CD4-positive, alpha-beta T cell (primary cell): ENCODE measurements at regions of chr20 and their contacts with region 1.

Region 1: DNA sequence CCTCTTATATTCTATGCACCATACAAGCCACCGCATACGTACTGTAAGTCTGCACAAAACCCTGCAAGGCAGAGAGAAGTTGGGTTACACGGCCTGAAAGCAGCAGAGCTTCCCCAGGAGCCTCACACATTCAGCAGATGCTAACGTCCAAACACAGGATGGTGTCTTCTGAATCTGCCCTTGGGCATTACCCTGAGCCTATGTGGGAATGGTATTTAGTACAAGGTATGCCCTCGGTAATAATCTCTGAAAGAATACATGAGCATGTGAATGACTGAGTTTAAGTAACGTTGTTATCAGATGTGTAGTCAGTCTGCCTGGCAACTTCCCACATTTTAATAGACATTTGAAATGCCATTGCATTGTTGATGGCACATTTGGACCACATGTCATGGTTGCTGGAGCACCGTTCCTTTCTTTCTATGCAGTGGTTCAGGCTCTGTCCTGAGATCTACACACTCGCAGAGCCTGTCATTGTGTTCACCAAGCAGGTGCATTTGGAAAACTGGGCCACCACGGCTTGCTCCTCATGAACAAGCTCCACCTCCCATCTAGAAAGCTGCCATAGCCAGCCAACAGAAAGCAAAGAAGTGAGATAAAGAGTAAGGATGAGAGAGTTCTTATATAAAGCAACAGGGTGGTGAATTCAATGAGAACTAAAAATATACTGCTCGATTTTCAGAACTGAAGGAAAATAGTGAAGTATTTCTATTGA is 136.5 kb upstream of the GGTLC1 start:
- DNase-seq: no peak
- ATAC-seq: no peak
- H3K4me3 ChIP-seq: no peak overlapping the region
- H3K4me3 Mint-ChIP-seq: no peak overlapping the region
- H3K27ac ChIP-seq: no peak overlapping the region
- H3K27ac Mint-ChIP-seq: no peak overlapping the region
- H3K4me1 ChIP-seq: no peaks in the 10 kb centered on the region
- H3K4me1 Mint-ChIP-seq: no peaks in the 10 kb centered on the region
- H3K27me3 ChIP-seq: peaks cover 0 to 3% of the 10 kb centered on the region in 2 experiments
- H3K27me3 Mint-ChIP-seq: peaks cover 10% of the 10 kb centered on the region
- CTCF ChIP-seq: no peak

Region 2: GRCh38 chr20:24066076-24066700 is 58.9 kb before region 1 on chr20:
- CTCF ChIA-PET with region 1: no interaction called
- POLR2A ChIA-PET with region 1: no interaction called
- intact Hi-C with region 1: loop called in 1 of 2 experiments (anchors 10 kb)
- DNase-seq: peak in 11 of 14 experiments; percentile 17 to 58 (median 38)
- ATAC-seq: peak; percentile 94
- H3K4me3 ChIP-seq: peak overlapping the region; percentile 13
- H3K4me3 Mint-ChIP-seq: peak overlapping the region; percentile 88
- H3K27ac ChIP-seq: peak overlapping the region in 1 of 2 donors; percentile 2
- H3K27ac Mint-ChIP-seq: peak overlapping the region; percentile 85
- H3K4me1 ChIP-seq: peaks cover 12% of the 10 kb centered on the region
- H3K4me1 Mint-ChIP-seq: peaks cover 21% of the 10 kb centered on the region
- H3K27me3 ChIP-seq: no peaks in the 10 kb centered on the region
- H3K27me3 Mint-ChIP-seq: no peaks in the 10 kb centered on the region
- CTCF ChIP-seq: no peak